PC-9 (cell line): ENCODE measurements at regions of chr10 and their contacts with region 1.

Region 1: GRCh38 chr10:29590915-29591650 is 43.7 kb downstream of the SVIL start:
- DNase-seq: no peak
- H3K4me3 ChIP-seq: no peak overlapping the region; the same call in 1 of the 2 replicates
- H3K27ac ChIP-seq: peak overlapping the region; percentile 99
- H3K4me1 ChIP-seq: peaks cover 49% of the 10 kb centered on the region
- H3K27me3 ChIP-seq: no peaks in the 10 kb centered on the region
- CTCF ChIP-seq: peak; percentile 28; the same call in 1 of the 2 replicates

Region 2: GRCh38 chr10:29409241-29410057 is 181.6 kb before region 1 on chr10:
- CTCF ChIA-PET with region 1: no interaction called
- POLR2A ChIA-PET with region 1: no interaction called
- intact Hi-C with region 1: no loop called
- DNase-seq: peak in 1 of 2 experiments; percentile 58
- H3K4me3 ChIP-seq: peak overlapping the region; percentile 75
- H3K27ac ChIP-seq: peak overlapping the region; percentile 34; the same call in 1 of the 2 replicates
- H3K4me1 ChIP-seq: peaks cover 4% of the 10 kb centered on the region; the same call in 1 of the 2 replicates
- H3K27me3 ChIP-seq: no peaks in the 10 kb centered on the region
- CTCF ChIP-seq: no peak

Region 3: GRCh38 chr10:29535012-29535777 is 55.9 kb before region 1 on chr10:
- CTCF ChIA-PET with region 1: no interaction called
- POLR2A ChIA-PET with region 1: interaction called, 30 read pairs
- intact Hi-C with region 1: loop called (anchors 2 kb)
- DNase-seq: peak in 1 of 2 experiments; percentile 69
- H3K4me3 ChIP-seq: no peak overlapping the region
- H3K27ac ChIP-seq: 0 out of 2 replicates have a peak overlapping the region, but pooled peaks have one; percentile 9
- H3K4me1 ChIP-seq: no peaks in the 10 kb centered on the region
- H3K27me3 ChIP-seq: no peaks in the 10 kb centered on the region
- CTCF ChIP-seq: peak; percentile 25; the same call in 1 of the 2 replicates

Region 4: GRCh38 chr10:29555746-29556481 is 35.2 kb before region 1 on chr10:
- CTCF ChIA-PET with region 1: no interaction called
- POLR2A ChIA-PET with region 1: no interaction called
- intact Hi-C with region 1: no loop called
- DNase-seq: no peak
- H3K4me3 ChIP-seq: no peak overlapping the region
- H3K27ac ChIP-seq: no peak overlapping the region
- H3K4me1 ChIP-seq: 0 out of 2 replicates have a peak, but pooled peaks cover 5% of the 10 kb centered on the region
- H3K27me3 ChIP-seq: no peaks in the 10 kb centered on the region
- CTCF ChIP-seq: no peak

Region 5: GRCh38 chr10:29658984-29659965 is 68.2 kb after region 1 on chr10:
- CTCF ChIA-PET with region 1: no interaction called
- POLR2A ChIA-PET with region 1: interaction called, 7 read pairs
- intact Hi-C with region 1: loop called (anchors 1 kb)
- DNase-seq: peak; percentile 87 to 97
- H3K4me3 ChIP-seq: no peak overlapping the region
- H3K27ac ChIP-seq: peak overlapping the region; percentile 76
- H3K4me1 ChIP-seq: peaks cover 51% of the 10 kb centered on the region
- H3K27me3 ChIP-seq: no peaks in the 10 kb centered on the region
- CTCF ChIP-seq: peak; percentile 45; the same call in 1 of the 2 replicates

Region 6: GRCh38 chr10:29735596-29736318 is 144.7 kb after region 1 on chr10:
- CTCF ChIA-PET with region 1: no interaction called
- POLR2A ChIA-PET with region 1: no interaction called
- intact Hi-C with region 1: loop called (anchors 2 kb)
- DNase-seq: peak; percentile 64 to 97
- H3K4me3 ChIP-seq: peak overlapping the region; percentile 73
- H3K27ac ChIP-seq: peak overlapping the region; percentile 93
- H3K4me1 ChIP-seq: peaks cover 22% of the 10 kb centered on the region
- H3K27me3 ChIP-seq: no peaks in the 10 kb centered on the region
- CTCF ChIP-seq: peak; percentile 84

Region 7: GRCh38 chr10:29811751-29812449 is 220.8 kb after region 1 on chr10:
- CTCF ChIA-PET with region 1: no interaction called
- POLR2A ChIA-PET with region 1: no interaction called
- intact Hi-C with region 1: loop called (anchors 1 kb)
- DNase-seq: peak; percentile 78 to 94
- H3K4me3 ChIP-seq: peak overlapping the region; percentile 33; the same call in 1 of the 2 replicates
- H3K27ac ChIP-seq: peak overlapping the region; percentile 99
- H3K4me1 ChIP-seq: peaks cover 58% of the 10 kb centered on the region
- H3K27me3 ChIP-seq: no peaks in the 10 kb centered on the region
- CTCF ChIP-seq: no peak